Common myeloid progenitor, CD34-positive (primary cell): ENCODE measurements at regions of chr6 and their contacts with region 1.

Region 1: DNA sequence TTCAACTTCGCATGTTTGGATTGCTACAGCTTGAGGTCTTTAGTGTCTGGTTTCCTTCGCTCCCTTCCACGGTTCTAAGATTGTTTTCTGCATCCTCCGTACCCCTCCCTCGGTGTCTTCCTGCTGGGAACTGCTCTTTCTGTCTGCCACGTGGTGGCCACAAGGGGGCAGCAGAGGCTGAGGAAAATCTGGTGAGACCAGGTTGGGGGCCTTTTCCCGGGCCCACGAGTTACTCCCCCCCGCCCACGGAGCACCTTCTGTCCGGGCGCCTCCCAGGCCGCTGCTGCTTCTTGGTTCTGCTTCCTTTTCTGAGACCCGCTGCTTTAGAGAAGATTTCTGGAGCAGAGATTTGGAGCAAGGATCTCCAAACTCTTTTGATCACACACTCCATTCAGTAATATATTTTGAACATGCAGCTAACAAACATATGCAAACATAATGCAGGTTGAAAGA is 21.1 kb upstream of the NOTCH4 start:
- DNase-seq: peak; percentile 74 to 79 (median 78)
- H3K4me3 ChIP-seq: peak overlapping the region in 3 of 7 experiments; percentile 43 to 46 (median 44)
- H3K27ac ChIP-seq: no peak overlapping the region
- H3K4me1 ChIP-seq: peaks cover 0 to 4% (median 4%) of the 10 kb centered on the region in 4 experiments
- H3K27me3 ChIP-seq: peaks cover 0 to 3% (median 0%) of the 10 kb centered on the region in 5 experiments

Region 2: GRCh38 chr6:32255199-32256153 is 10.5 kb after region 1 on chr6:
- CTCF ChIA-PET with region 1: interaction called, 12 read pairs
- POLR2A ChIA-PET with region 1: no interaction called
- DNase-seq: peak; percentile 85 to 91 (median 90)
- H3K4me3 ChIP-seq: peak overlapping the region in 5 of 7 experiments; percentile 48 to 76 (median 59)
- H3K27ac ChIP-seq: peak overlapping the region in 1 of 2 experiments; percentile 59
- H3K4me1 ChIP-seq: peaks cover 0 to 11% (median 2%) of the 10 kb centered on the region in 4 experiments
- H3K27me3 ChIP-seq: no peaks in the 10 kb centered on the region